Activated B cell treated with CpG ODN at 0.5 μM for 24 hours (primary cell): ENCODE measurements at regions of chr20 and their contacts with region 1.

Region 1: GRCh38 chr20:31674895-31675827 is 37.4 kb downstream of the COX4I2 start:
- DNase-seq: peak; percentile 26
- ATAC-seq: peak; percentile 82
- H3K4me3 Mint-ChIP-seq: peak overlapping the region; percentile 89
- H3K27ac Mint-ChIP-seq: peak overlapping the region; percentile 94
- H3K4me1 Mint-ChIP-seq: peaks cover 44% of the 10 kb centered on the region
- H3K27me3 Mint-ChIP-seq: no peaks in the 10 kb centered on the region
- CTCF ChIP-seq: no peak

Region 2: GRCh38 chr20:31573555-31574321 is 101.4 kb before region 1 on chr20:
- CTCF ChIA-PET with region 1: no interaction called
- POLR2A ChIA-PET with region 1: no interaction called
- intact Hi-C with region 1: no loop called
- DNase-seq: no peak
- ATAC-seq: peak; percentile 2
- H3K4me3 Mint-ChIP-seq: peak overlapping the region; percentile 88
- H3K27ac Mint-ChIP-seq: peak overlapping the region; percentile 79
- H3K4me1 Mint-ChIP-seq: peaks cover 18% of the 10 kb centered on the region
- H3K27me3 Mint-ChIP-seq: no peaks in the 10 kb centered on the region
- CTCF ChIP-seq: no peak

Region 3: DNA sequence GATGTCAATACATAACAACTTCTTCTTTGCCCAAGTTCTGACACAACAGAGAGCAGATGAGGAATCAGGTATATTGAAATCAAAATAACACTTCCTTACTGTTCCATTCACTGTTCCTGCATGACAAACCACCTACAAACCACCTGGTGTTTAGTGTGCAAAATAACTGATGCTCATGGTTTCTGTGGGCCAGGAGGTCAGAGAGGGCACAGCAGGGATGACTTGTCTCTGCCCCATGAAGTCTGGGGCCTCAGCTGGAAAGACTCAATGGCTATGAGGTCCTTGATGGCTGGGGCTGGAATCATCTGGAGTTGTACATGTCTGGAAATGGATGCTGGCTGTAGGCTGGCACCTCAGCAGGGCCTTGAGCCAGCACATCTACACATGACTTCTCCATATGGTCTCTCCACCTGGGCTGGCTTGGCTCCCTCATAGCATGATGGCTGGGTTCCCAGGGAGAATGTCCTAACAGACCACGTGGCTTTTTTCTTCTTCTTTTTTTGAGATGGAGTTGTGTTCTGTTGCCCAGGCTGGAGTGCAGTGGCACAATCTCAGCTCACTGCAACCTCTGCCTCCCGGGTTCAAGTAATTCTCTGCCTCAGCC is 44.9 kb before region 1 on chr20:
- CTCF ChIA-PET with region 1: no interaction called
- POLR2A ChIA-PET with region 1: no interaction called
- intact Hi-C with region 1: no loop called
- DNase-seq: no peak
- ATAC-seq: no peak
- H3K4me3 Mint-ChIP-seq: no peak overlapping the region
- H3K27ac Mint-ChIP-seq: no peak overlapping the region
- H3K4me1 Mint-ChIP-seq: peaks cover 6% of the 10 kb centered on the region
- H3K27me3 Mint-ChIP-seq: no peaks in the 10 kb centered on the region
- CTCF ChIP-seq: no peak

Region 4: DNA sequence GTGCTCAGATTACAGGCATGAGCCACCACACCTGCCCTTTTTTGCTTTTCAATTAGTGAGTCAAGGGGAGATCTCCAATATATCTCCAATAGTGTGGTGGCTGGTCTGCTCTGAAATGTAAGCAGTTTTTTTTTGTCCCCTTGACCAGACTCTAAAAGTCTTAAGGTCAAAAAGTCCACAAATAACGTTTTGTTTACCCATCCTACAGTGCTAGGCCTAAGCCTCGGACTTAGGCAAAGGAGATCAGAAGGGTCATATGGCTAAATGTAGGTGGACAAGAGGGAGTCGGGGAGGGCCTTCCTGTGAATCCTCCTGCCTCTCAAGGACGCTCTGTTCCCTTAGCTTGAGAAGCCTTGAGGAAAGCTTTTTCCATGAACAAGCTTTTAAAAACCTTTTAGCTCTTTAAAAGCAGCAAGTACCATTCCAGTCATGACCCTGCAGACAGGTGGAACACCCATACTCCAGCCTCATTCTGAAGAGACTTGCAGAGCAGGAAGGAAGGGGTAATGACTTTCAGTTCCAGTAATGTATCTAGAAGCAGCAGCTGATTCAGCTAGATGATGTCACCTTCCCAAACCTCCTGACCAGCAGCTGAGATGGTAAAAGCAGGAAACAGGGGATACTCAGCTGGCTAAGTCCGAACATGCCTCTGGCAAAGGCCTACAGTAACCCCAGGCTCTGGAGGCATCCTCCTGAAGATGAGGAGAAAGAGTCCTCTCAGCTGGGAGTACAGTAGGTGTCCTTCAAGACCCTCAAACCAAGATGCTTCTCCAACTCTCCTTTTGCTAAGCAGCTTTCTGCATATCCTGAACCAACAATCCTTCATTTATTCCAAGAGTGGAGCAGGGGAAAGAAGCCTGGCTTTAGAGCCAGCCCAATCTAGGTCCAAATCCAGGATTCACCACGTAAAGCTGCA is 23.9 kb after region 1 on chr20:
- CTCF ChIA-PET with region 1: no interaction called
- POLR2A ChIA-PET with region 1: interaction called, 10 read pairs
- intact Hi-C with region 1: no loop called
- DNase-seq: no peak
- ATAC-seq: peak; percentile 71
- H3K4me3 Mint-ChIP-seq: no peak overlapping the region
- H3K27ac Mint-ChIP-seq: peak overlapping the region; percentile 71
- H3K4me1 Mint-ChIP-seq: peaks cover 44% of the 10 kb centered on the region
- H3K27me3 Mint-ChIP-seq: no peaks in the 10 kb centered on the region
- CTCF ChIP-seq: no peak

Region 5: DNA sequence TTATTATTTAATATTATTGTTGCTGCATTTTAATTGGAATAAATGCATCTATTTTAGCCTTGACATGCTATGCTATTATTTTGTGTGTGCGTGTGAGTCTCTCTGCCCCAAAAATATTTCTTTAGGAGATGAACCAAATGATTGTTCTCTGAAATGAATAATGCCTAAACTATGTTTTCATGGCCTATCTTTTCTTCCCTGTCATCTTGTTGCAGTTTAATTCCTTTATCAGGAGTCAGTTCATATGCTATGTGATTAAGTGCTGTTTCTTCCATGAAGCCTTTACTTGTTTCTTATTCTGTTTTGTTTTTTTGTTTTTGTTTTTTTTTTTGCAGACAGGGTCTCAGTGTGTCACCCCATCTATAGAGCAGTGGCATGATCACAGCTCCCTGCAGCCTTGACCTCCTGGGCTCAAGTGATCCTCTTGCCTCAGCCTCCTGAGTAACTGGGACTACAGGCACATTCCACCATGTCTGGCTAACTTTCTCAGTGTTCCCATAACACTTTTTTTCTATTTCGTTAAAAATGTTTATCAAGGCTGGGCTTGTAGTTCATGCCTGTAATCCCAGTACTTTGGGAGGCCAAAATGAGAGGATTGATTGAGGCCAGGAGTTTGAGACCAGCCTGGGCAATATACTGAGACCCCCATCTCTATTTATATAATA is 89.6 kb after region 1 on chr20:
- CTCF ChIA-PET with region 1: no interaction called
- POLR2A ChIA-PET with region 1: no interaction called
- intact Hi-C with region 1: no loop called
- DNase-seq: no peak
- ATAC-seq: no peak
- H3K4me3 Mint-ChIP-seq: no peak overlapping the region
- H3K27ac Mint-ChIP-seq: no peak overlapping the region
- H3K4me1 Mint-ChIP-seq: no peaks in the 10 kb centered on the region
- H3K27me3 Mint-ChIP-seq: no peaks in the 10 kb centered on the region
- CTCF ChIP-seq: no peak

Region 6: GRCh38 chr20:31781945-31782344 is 106.8 kb after region 1 on chr20:
- CTCF ChIA-PET with region 1: no interaction called
- POLR2A ChIA-PET with region 1: no interaction called
- intact Hi-C with region 1: no loop called
- DNase-seq: no peak
- ATAC-seq: no peak
- H3K4me3 Mint-ChIP-seq: no peak overlapping the region
- H3K27ac Mint-ChIP-seq: no peak overlapping the region
- H3K4me1 Mint-ChIP-seq: no peaks in the 10 kb centered on the region
- H3K27me3 Mint-ChIP-seq: no peaks in the 10 kb centered on the region
- CTCF ChIP-seq: no peak